Endothelial cell of umbilical vein (primary cell): ENCODE measurements at regions of chrX and their contacts with region 1.

Region 1: DNA sequence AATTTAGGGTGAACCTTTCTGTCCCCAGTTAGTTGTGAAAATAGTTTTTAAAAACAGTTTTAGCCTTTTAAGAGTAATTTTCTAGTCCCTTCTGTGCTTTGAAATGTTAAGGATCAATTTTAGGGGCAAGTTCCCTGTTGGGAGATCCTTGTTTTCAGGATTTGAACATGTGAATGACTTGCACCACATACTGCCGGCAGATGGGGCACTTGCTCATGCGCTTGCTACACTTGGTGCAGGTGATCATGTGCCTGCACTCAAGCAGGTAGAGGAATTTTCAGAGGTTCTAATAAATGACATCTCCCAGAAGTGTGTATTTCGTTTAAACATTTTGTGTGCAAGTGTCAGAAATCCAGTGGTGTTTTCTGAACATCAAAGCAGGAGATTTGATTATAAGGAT is 195.9 kb downstream of the CHM start:
- DNase-seq: peak; percentile 1
- H3K4me3 ChIP-seq: no peak overlapping the region
- H3K27ac ChIP-seq: no peak overlapping the region
- H3K4me1 ChIP-seq: no peaks in the 10 kb centered on the region
- H3K27me3 ChIP-seq: no peaks in the 10 kb centered on the region
- CTCF ChIP-seq: peak in 1 of 2 donors; percentile 31
- POLR2A ChIP-seq: no peak

Region 2: GRCh38 chrX:86047174-86047935 is 195.9 kb after region 1 on chrX and contains the start of gene CHM:
- CTCF ChIA-PET with region 1: no interaction called
- POLR2A ChIA-PET with region 1: no interaction called
- dilution Hi-C with region 1: no loop called
- intact Hi-C with region 1: loop called (anchors 10 kb)
- DNase-seq: peak; percentile 93
- H3K4me3 ChIP-seq: peak within 1 kb of the TSS; percentile 41 to 73 (median 61)
- H3K27ac ChIP-seq: peak within 1 kb of the TSS; percentile 77
- H3K4me1 ChIP-seq: peaks cover 10% of the 10 kb centered on the region
- H3K27me3 ChIP-seq: peaks cover 0 to 2% of the 10 kb centered on the region in 2 experiments
- CTCF ChIP-seq: no peak
- POLR2A ChIP-seq: peak; percentile 68
- total RNA-seq, gene CHM: 17.6 and 18.4 TPM in 2 replicates